ENCODE measurements at regions of chr15 and their contacts with region 1.

Region 1: DNA sequence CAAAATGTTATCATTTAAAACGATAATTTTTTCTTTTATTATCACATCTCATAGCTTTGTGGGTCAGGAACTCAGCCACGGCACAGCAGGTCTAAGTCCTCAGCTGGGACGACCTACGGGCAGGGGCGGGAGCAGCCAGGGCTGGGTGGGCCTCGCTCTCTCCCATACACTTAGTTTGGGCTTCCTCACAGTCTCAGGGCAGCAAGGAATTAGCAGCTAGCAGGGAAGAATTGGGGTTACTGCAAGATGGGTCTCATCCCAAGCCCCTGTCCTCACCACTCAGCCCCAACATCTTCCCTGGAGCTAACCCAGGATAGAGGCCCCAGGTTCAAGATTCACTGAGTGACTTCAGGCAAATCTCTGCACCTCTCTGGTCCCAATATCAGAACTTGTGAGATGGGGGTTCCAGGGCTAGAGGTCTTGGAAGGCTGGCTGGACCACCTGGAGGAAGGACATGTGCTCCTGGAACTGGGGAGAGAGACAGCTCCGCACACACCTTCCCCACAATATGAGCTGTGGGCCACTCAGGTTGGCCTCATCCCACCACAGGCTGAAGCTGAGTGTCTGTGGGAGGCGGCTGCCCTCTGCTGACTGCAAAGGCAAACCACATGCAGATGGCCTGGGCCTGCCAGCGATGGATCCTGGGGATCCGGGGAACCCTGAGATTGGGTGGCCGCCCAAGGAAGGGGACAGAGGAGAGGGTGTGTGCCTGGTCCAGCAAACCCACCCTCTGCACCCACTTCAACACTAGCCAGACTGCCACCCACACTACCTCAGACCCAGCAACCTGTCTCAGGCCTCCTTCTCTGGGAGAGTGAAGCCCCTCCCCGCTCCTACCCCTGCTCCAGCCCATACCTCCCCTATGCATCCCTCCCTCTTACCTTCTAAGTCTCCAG is 45.0 kb downstream of the CYP11A1 start:
- DNase-seq: no peak
- H3K4me3 ChIP-seq: no peak overlapping the region
- CTCF ChIP-seq: peak; percentile 99

Region 2: GRCh38 chr15:73950831-73951561 is 371.4 kb before region 1 on chr15:
- CTCF ChIA-PET with region 1: interaction called, 11 read pairs
- POLR2A ChIA-PET with region 1: interaction called, 3 read pairs
- DNase-seq: peak; percentile 91
- H3K4me3 ChIP-seq: no peak overlapping the region
- CTCF ChIP-seq: peak; percentile 93

Region 3: DNA sequence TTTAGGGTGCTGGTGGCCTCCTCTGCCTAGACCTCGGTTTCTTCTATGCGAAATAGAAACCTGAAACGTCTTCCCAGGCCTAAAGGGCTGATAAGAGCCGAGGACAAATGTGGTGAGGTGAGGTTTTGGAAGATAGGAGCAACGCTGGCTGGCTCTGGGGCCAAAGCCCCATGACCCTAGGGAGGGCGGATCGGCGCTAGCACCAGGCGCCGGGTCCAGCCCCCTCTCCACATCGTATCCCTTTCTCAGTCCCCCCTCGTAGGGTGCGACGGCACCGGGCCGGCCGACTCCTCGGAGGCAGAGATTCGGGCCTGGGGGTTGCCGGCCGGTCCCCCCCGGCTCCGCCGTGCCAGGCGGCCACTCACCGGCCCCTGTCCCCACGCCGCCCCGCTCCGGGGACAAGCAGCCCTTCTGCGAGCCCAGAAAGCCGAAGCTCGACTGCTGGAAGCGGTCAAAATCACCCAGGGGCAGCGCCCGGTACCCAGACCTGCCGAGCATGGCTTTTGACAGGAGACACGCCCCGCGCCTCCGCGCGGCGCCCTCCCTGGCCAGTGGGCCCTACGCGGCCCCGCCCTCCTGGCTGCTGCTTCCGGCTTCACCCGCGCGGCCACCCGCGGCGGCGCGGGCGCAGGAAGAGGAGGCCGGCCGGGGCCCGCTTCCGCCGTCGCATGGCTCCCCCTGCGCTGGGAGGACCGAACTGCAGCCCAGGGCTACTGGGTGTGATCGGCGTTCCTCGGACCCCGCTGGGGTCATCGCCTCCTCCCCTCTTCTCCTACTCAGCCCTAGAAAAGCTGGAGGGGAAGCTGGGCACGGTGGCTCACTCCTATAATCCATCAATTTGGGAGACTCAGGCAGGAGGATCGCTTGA is 330.5 kb before region 1 on chr15 and contains the start of gene STOML1:
- CTCF ChIA-PET with region 1: interaction called, 14 read pairs
- POLR2A ChIA-PET with region 1: no interaction called
- DNase-seq: no peak
- H3K4me3 ChIP-seq: peak within 1 kb of the TSS; percentile 71
- CTCF ChIP-seq: peak; percentile 85

Region 4: GRCh38 chr15:74127260-74127953 is 195.0 kb before region 1 on chr15:
- CTCF ChIA-PET with region 1: interaction called, 153 read pairs
- POLR2A ChIA-PET with region 1: interaction called, 3 read pairs
- DNase-seq: peak; percentile 5
- H3K4me3 ChIP-seq: peak overlapping the region; percentile 51
- CTCF ChIP-seq: peak; percentile 100

Region 5: DNA sequence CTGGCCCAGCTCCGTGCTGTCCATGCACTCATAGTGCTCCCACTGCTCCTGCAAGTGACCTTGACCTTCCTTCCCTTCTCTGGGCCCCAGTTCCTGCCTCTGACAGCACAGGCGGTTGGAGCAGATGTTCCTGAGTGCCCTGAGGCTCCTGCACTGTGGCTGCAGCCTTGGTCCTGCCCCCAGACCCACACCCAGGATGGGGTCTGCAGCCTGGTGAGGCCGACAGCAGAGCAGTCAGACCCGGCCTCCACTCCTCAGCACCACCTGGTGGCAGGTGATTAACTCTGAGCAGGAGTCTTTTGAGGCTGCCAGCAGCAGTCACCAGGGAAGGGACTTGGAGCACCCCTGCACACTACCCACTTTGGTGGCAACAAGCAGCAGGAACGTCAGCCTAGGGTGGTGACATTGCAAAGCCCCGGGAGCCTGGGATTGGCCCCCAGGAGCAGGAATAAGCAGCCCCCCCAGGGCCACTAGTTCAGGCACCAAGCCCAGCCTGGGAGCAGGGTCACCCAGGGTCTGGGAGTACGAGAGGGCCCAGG is 19.5 kb before region 1 on chr15:
- CTCF ChIA-PET with region 1: interaction called, 226 read pairs
- POLR2A ChIA-PET with region 1: no interaction called
- DNase-seq: no peak
- H3K4me3 ChIP-seq: no peak overlapping the region
- CTCF ChIP-seq: peak; percentile 68

Region 6: GRCh38 chr15:74333662-74334061 is 11.2 kb after region 1 on chr15:
- CTCF ChIA-PET with region 1: interaction called, 67 read pairs
- POLR2A ChIA-PET with region 1: no interaction called
- DNase-seq: no peak
- H3K4me3 ChIP-seq: no peak overlapping the region
- CTCF ChIP-seq: no peak

Region 7: GRCh38 chr15:74489518-74490338 is 167.3 kb after region 1 on chr15:
- CTCF ChIA-PET with region 1: no interaction called
- POLR2A ChIA-PET with region 1: no interaction called
- DNase-seq: no peak
- H3K4me3 ChIP-seq: no peak overlapping the region
- CTCF ChIP-seq: peak; percentile 82

Region 8: GRCh38 chr15:74565381-74566085 is 243.1 kb after region 1 on chr15:
- CTCF ChIA-PET with region 1: no interaction called
- POLR2A ChIA-PET with region 1: no interaction called
- DNase-seq: no peak
- H3K4me3 ChIP-seq: no peak overlapping the region
- CTCF ChIP-seq: no peak